Psoas muscle (tissue), 8 donors: ENCODE measurements at regions of chr9 and their contacts with region 1.

Region 1: DNA sequence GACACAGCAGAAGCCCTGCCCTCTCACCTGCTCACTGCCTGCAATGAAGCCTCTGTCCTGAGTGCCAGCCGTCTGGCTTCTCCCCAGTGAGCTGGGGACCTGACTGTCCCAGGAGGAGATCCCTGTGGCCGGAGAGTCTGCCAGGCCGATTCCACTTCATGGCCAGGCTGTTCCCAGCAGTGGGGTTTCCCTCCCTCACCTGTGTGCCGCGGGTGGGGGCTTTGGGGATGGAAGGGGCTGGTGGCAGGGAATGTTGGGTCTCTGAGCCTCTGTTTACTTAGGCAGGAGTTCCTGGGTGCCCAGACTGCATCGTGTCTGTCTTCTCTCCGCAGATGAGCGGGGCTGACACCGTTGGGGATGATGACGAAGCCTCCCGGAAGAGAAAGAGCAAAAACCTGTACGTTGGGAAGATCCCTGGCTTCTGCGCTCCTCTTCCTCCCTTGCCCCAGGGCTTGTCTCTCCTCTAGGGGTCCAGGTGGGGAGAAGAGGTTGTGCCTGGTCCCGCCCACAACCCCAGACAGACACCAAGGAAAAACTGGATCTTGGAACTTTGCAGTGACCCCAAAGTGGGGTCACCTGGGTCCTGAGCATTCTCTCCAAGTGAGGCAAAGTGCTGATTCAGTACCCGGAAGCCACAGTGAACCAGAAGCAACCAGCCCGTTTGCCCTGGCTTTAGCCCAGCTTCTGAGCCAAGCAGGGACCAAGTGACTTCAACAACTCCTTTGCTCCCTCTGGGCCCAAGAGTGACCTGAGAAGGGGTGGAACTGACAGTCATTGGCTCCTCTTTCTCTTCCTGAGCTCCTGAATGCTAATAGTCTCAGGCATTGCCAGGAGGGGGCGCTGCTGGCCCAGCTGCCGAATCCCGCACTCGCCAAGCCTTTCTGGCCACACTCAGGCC is 127.7 kb downstream of the RGS3 start:
- DNase-seq: peak; percentile 81 to 91
- ATAC-seq: peak; percentile 63 to 75 (median 72)
- H3K4me3 ChIP-seq: no peak overlapping the region
- H3K27ac ChIP-seq: peak overlapping the region; percentile 60
- H3K4me1 ChIP-seq: peaks cover 29% of the 10 kb centered on the region
- H3K27me3 ChIP-seq: no peaks in the 10 kb centered on the region
- CTCF ChIP-seq: peak; percentile 97

Region 2: GRCh38 chr9:113446323-113446740 is 144.9 kb before region 1 on chr9:
- intact Hi-C with region 1: loop called (anchors 2 kb)
- DNase-seq: no peak
- ATAC-seq: peak; percentile 48 to 89 (median 70)
- H3K4me3 ChIP-seq: no peak overlapping the region
- H3K27ac ChIP-seq: no peak overlapping the region
- H3K4me1 ChIP-seq: no peaks in the 10 kb centered on the region
- H3K27me3 ChIP-seq: no peaks in the 10 kb centered on the region
- CTCF ChIP-seq: peak; percentile 72

Region 3: GRCh38 chr9:113636693-113637092 is 45.4 kb after region 1 on chr9:
- intact Hi-C with region 1: loop called in 1 of 2 experiments (anchors 1 kb)
- DNase-seq: no peak
- ATAC-seq: no peak
- H3K4me3 ChIP-seq: no peak overlapping the region
- H3K27ac ChIP-seq: no peak overlapping the region
- H3K4me1 ChIP-seq: peaks cover 24% of the 10 kb centered on the region
- H3K27me3 ChIP-seq: no peaks in the 10 kb centered on the region
- CTCF ChIP-seq: no peak

Region 4: DNA sequence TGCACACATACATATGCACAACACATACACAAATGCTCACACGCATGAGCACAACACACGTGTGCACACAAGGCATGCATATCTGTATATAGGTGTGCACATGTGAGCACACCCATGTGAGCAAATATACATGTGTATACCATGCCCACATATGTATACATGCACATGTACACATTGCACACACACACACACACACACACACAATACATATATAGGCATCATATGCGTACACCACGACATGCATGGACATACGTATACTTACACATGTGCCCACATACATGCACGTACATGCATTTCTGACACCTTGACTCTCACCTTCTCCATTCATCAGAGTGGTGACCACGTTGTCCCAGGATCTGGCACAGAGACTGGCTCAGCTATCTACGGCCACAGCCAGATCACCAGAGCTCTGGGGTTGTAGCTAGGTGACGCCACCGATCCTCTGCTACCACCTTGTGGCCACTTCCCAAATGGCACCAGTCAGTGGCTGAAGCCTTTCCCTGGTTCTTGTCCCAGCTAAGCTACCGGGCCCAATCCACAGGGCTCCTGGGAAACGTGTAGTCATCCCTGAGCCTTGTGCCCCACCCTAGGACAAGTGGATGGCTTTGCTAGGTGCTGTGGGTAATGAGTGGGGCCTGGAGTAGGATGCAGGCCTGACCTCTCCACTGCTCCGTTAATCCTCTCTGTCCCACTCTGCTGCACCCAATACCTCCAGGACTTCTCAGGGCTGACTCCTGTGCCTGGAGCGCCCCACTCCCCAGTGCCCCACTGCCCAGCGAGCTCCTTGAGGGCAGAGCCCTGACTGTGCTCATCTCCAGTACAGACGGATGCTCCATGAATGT is 66.7 kb after region 1 on chr9:
- intact Hi-C with region 1: loop called (anchors 1 kb)
- DNase-seq: peak; percentile 82 to 91
- ATAC-seq: peak; percentile 85 to 93 (median 90)
- H3K4me3 ChIP-seq: no peak overlapping the region
- H3K27ac ChIP-seq: no peak overlapping the region
- H3K4me1 ChIP-seq: peaks cover 22% of the 10 kb centered on the region
- H3K27me3 ChIP-seq: no peaks in the 10 kb centered on the region
- CTCF ChIP-seq: peak; percentile 97